B cell (primary cell): ENCODE measurements at regions of chr1 and their contacts with region 1.

Region 1: GRCh38 chr1:1115786-1116700 is at the start of gene C1orf159:
- DNase-seq: peak; percentile 98
- ATAC-seq: peak; percentile 92
- H3K4me3 ChIP-seq: peak within 1 kb of the TSS; percentile 23 to 80 (median 68)
- H3K4me3 Mint-ChIP-seq: peak within 1 kb of the TSS; percentile 88
- H3K27ac ChIP-seq: peak within 1 kb of the TSS in 1 of 2 donors; percentile 76
- H3K27ac Mint-ChIP-seq: peak within 1 kb of the TSS; percentile 88
- H3K4me1 ChIP-seq: peaks cover 10 to 16% of the 10 kb centered on the region in 2 donors
- H3K4me1 Mint-ChIP-seq: peaks cover 16% of the 10 kb centered on the region
- H3K27me3 ChIP-seq: peaks cover 0 to 29% (median 3%) of the 10 kb centered on the region in 4 experiments
- H3K27me3 Mint-ChIP-seq: peaks cover 9% of the 10 kb centered on the region
- CTCF ChIP-seq: no peak
- total RNA-seq, gene C1orf159: 23.0 and 25.3 TPM in 2 replicates

Region 2: GRCh38 chr1:1013105-1013921 is 102.7 kb before region 1 on chr1 and contains the start of gene ISG15:
- CTCF ChIA-PET with region 1: no interaction called
- POLR2A ChIA-PET with region 1: no interaction called
- intact Hi-C with region 1: loop called (anchors 2 kb)
- DNase-seq: peak; percentile 91
- ATAC-seq: peak; percentile 96
- H3K4me3 ChIP-seq: peak within 1 kb of the TSS; percentile 68 to 94 (median 75)
- H3K4me3 Mint-ChIP-seq: peak within 1 kb of the TSS; percentile 95
- H3K27ac ChIP-seq: peak within 1 kb of the TSS; percentile 88 to 93
- H3K27ac Mint-ChIP-seq: peak within 1 kb of the TSS; percentile 98
- H3K4me1 ChIP-seq: peaks cover 16 to 23% of the 10 kb centered on the region in 2 donors
- H3K4me1 Mint-ChIP-seq: peaks cover 27% of the 10 kb centered on the region
- H3K27me3 ChIP-seq: no peaks in the 10 kb centered on the region
- H3K27me3 Mint-ChIP-seq: peaks cover 6% of the 10 kb centered on the region
- CTCF ChIP-seq: no peak
- total RNA-seq, gene ISG15: 25.2 and 28.3 TPM in 2 replicates

Region 3: GRCh38 chr1:1040004-1040991 is 75.7 kb before region 1 on chr1:
- CTCF ChIA-PET with region 1: interaction called, 3 read pairs
- POLR2A ChIA-PET with region 1: interaction called, 3 read pairs
- intact Hi-C with region 1: loop called (anchors 2 kb)
- DNase-seq: peak; percentile 86
- ATAC-seq: peak; percentile 80
- H3K4me3 ChIP-seq: peak overlapping the region in 4 of 5 experiments; percentile 26 to 56 (median 50)
- H3K4me3 Mint-ChIP-seq: peak overlapping the region; percentile 82
- H3K27ac ChIP-seq: no peak overlapping the region
- H3K27ac Mint-ChIP-seq: peak overlapping the region; percentile 50
- H3K4me1 ChIP-seq: peaks cover 25 to 27% of the 10 kb centered on the region in 2 donors
- H3K4me1 Mint-ChIP-seq: peaks cover 32% of the 10 kb centered on the region
- H3K27me3 ChIP-seq: peaks cover 0 to 35% (median 10%) of the 10 kb centered on the region in 4 experiments
- H3K27me3 Mint-ChIP-seq: peaks cover 21% of the 10 kb centered on the region
- CTCF ChIP-seq: no peak

Region 4: GRCh38 chr1:1144122-1144842 is 28.2 kb after region 1 on chr1:
- CTCF ChIA-PET with region 1: no interaction called
- POLR2A ChIA-PET with region 1: no interaction called
- intact Hi-C with region 1: loop called (anchors 1 kb)
- DNase-seq: peak; percentile 92
- ATAC-seq: peak; percentile 95
- H3K4me3 ChIP-seq: peak overlapping the region in 4 of 5 experiments; percentile 29 to 45 (median 34)
- H3K4me3 Mint-ChIP-seq: peak overlapping the region; percentile 78
- H3K27ac ChIP-seq: peak overlapping the region; percentile 98
- H3K27ac Mint-ChIP-seq: peak overlapping the region; percentile 96
- H3K4me1 ChIP-seq: peaks cover 33 to 47% of the 10 kb centered on the region in 2 donors
- H3K4me1 Mint-ChIP-seq: peaks cover 29% of the 10 kb centered on the region
- H3K27me3 ChIP-seq: no peaks in the 10 kb centered on the region
- H3K27me3 Mint-ChIP-seq: no peaks in the 10 kb centered on the region
- CTCF ChIP-seq: no peak

Region 5: GRCh38 chr1:1273512-1274298 is 157.7 kb after region 1 on chr1 and contains the start of gene UBE2J2:
- CTCF ChIA-PET with region 1: interaction called, 3 read pairs
- POLR2A ChIA-PET with region 1: interaction called, 6 read pairs
- intact Hi-C with region 1: loop called (anchors 1 kb)
- DNase-seq: peak; percentile 94
- ATAC-seq: peak; percentile 98
- H3K4me3 ChIP-seq: peak within 1 kb of the TSS; percentile 3 to 84 (median 77)
- H3K4me3 Mint-ChIP-seq: peak within 1 kb of the TSS; percentile 88
- H3K27ac ChIP-seq: peak within 1 kb of the TSS; percentile 24 to 77
- H3K27ac Mint-ChIP-seq: peak within 1 kb of the TSS; percentile 76
- H3K4me1 ChIP-seq: peaks cover 29 to 38% of the 10 kb centered on the region in 2 donors
- H3K4me1 Mint-ChIP-seq: peaks cover 36% of the 10 kb centered on the region
- H3K27me3 ChIP-seq: no peaks in the 10 kb centered on the region
- H3K27me3 Mint-ChIP-seq: no peaks in the 10 kb centered on the region
- CTCF ChIP-seq: no peak
- total RNA-seq, gene UBE2J2: 115 and 120 TPM in 2 replicates

Region 6: GRCh38 chr1:1324521-1325287 is 208.7 kb after region 1 on chr1 and contains the starts of genes CPTP and INTS11:
- CTCF ChIA-PET with region 1: no interaction called
- POLR2A ChIA-PET with region 1: no interaction called
- intact Hi-C with region 1: loop called (anchors 1 kb)
- DNase-seq: peak; percentile 95
- ATAC-seq: peak; percentile 89
- H3K4me3 ChIP-seq: peak within 1 kb of the TSS; percentile 31 to 84 (median 74)
- H3K4me3 Mint-ChIP-seq: peak within 1 kb of the TSS; percentile 93
- H3K27ac ChIP-seq: peak within 1 kb of the TSS; percentile 10 to 75
- H3K27ac Mint-ChIP-seq: peak within 1 kb of the TSS; percentile 92
- H3K4me1 ChIP-seq: peaks cover 20 to 32% of the 10 kb centered on the region in 2 donors
- H3K4me1 Mint-ChIP-seq: peaks cover 29% of the 10 kb centered on the region
- H3K27me3 ChIP-seq: no peaks in the 10 kb centered on the region
- H3K27me3 Mint-ChIP-seq: no peaks in the 10 kb centered on the region
- CTCF ChIP-seq: no peak
- total RNA-seq, gene CPTP: 18.8 and 21.6 TPM in 2 replicates
- total RNA-seq, gene INTS11: 149 and 167 TPM in 2 replicates